Ovary (tissue), 10 donors: ENCODE measurements at regions of chr5 and their contacts with region 1.

Region 1: GRCh38 chr5:38373743-38374142 is 115.4 kb downstream of the EGFLAM start:
- DNase-seq: no peak
- H3K4me3 ChIP-seq: no peak overlapping the region
- H3K27ac ChIP-seq: no peak overlapping the region
- H3K4me1 ChIP-seq: peaks cover 18% of the 10 kb centered on the region
- H3K27me3 ChIP-seq: no peaks in the 10 kb centered on the region
- CTCF ChIP-seq: no peak
- EP300 ChIP-seq: no peak
- POLR2A ChIP-seq: no peak

Region 2: GRCh38 chr5:38258319-38259061 is 115.3 kb before region 1 on chr5 and contains the start of gene EGFLAM:
- intact Hi-C with region 1: loop called in 1 of 4 experiments (anchors 10 kb)
- DNase-seq: peak; percentile 56 to 72 (median 66)
- H3K4me3 ChIP-seq: peak within 1 kb of the TSS; percentile 55
- H3K27ac ChIP-seq: peak within 1 kb of the TSS; percentile 47 to 68
- H3K4me1 ChIP-seq: no peaks in the 10 kb centered on the region
- H3K27me3 ChIP-seq: no peaks in the 10 kb centered on the region
- CTCF ChIP-seq: peak in 2 of 3 donors; percentile 12 to 19
- EP300 ChIP-seq: no peak
- POLR2A ChIP-seq: no peak
- total RNA-seq, gene EGFLAM: 6.1 to 37.8 (median 17.1) TPM